CD8-positive, alpha-beta T cell (primary cell): ENCODE measurements at regions of chr1 and their contacts with region 1.

Region 1: DNA sequence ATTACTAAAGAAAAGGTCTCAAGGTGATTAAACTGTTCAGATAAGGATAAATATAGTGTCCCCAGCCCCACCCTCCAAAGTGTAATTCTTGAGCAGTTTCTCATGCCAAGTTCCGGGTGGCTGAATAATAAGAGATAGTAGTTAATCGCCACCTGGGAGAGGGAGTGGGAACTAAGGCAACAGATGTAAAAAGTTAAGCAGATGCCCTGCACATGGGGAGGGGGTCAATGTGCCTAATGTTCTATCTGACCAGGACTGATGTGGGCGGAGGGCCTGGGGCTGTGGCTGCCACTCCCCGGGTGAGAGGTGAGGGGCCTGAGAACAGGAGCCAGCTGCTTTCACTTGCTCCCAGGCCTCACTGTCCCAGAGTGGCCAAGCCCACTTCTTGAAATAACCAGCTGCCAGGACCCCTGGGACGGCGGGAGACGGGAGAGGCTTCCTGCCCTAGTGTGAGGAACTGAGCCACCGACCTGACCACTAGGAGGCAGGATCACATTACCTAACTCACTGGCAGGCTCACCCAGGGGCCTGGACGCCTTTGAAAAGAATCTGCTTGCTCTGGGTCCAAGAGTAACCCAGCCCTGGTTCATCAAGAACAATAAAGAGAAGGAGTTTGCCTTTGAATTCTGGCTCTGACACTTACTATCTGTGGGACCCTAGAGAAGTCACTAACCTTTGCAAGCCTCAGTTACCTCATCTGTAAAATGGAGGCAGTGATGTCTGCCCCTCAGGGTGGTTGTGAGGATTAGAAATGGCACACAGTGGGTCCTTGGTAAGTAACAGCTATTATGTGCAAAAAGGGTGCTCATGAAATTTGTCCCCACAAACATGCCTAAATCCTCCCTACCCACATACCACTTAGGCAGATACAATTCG is 179.2 kb downstream of the ATG4C start:
- DNase-seq: peak in 2 of 9 experiments; percentile 5 to 6
- ATAC-seq: no peak
- H3K4me3 ChIP-seq: no peak overlapping the region
- H3K4me3 Mint-ChIP-seq: no peak overlapping the region
- H3K27ac ChIP-seq: no peak overlapping the region
- H3K27ac Mint-ChIP-seq: no peak overlapping the region
- H3K4me1 ChIP-seq: no peaks in the 10 kb centered on the region
- H3K4me1 Mint-ChIP-seq: no peaks in the 10 kb centered on the region
- H3K27me3 ChIP-seq: no peaks in the 10 kb centered on the region
- H3K27me3 Mint-ChIP-seq: peaks cover 10% of the 10 kb centered on the region
- CTCF ChIP-seq: no peak

Region 2: GRCh38 chr1:62891956-62892561 is 71.1 kb before region 1 on chr1:
- CTCF ChIA-PET with region 1: no interaction called
- POLR2A ChIA-PET with region 1: no interaction called
- intact Hi-C with region 1: no loop called
- DNase-seq: no peak
- ATAC-seq: no peak
- H3K4me3 ChIP-seq: no peak overlapping the region
- H3K4me3 Mint-ChIP-seq: no peak overlapping the region
- H3K27ac ChIP-seq: no peak overlapping the region
- H3K27ac Mint-ChIP-seq: no peak overlapping the region
- H3K4me1 ChIP-seq: no peaks in the 10 kb centered on the region
- H3K4me1 Mint-ChIP-seq: no peaks in the 10 kb centered on the region
- H3K27me3 ChIP-seq: no peaks in the 10 kb centered on the region
- H3K27me3 Mint-ChIP-seq: peaks cover 20% of the 10 kb centered on the region
- CTCF ChIP-seq: no peak

Region 3: DNA sequence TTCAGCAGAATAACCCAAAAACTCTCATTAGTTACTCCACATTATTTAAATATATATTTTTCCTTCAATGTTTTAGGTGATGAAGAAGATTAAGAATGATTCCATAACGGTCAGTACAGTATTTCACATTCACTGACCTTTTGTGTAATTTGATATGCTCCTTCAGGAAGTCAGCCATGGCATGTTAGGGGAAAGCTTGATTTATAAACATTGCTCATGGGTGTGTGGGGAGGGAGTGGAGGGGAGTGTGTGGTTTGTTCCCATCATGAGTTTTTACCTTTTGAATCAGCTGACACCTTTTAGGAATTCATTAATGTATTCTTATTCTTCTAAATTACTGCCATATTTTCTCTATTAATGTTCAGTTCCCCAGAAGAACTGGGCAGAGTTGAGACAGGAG is 61.0 kb after region 1 on chr1:
- CTCF ChIA-PET with region 1: no interaction called
- POLR2A ChIA-PET with region 1: no interaction called
- intact Hi-C with region 1: loop called in 1 of 2 experiments (anchors 1 kb)
- DNase-seq: no peak
- ATAC-seq: no peak
- H3K4me3 ChIP-seq: no peak overlapping the region
- H3K4me3 Mint-ChIP-seq: no peak overlapping the region
- H3K27ac ChIP-seq: no peak overlapping the region
- H3K27ac Mint-ChIP-seq: no peak overlapping the region
- H3K4me1 ChIP-seq: no peaks in the 10 kb centered on the region
- H3K4me1 Mint-ChIP-seq: no peaks in the 10 kb centered on the region
- H3K27me3 ChIP-seq: no peaks in the 10 kb centered on the region
- H3K27me3 Mint-ChIP-seq: peaks cover 3% of the 10 kb centered on the region
- CTCF ChIP-seq: no peak